Activated CD4-positive, alpha-beta T cell treated with anti-CD3 and anti-CD28 coated beads for 36 hours (primary cell): ENCODE measurements at regions of chr3 and their contacts with region 1.

Region 1: DNA sequence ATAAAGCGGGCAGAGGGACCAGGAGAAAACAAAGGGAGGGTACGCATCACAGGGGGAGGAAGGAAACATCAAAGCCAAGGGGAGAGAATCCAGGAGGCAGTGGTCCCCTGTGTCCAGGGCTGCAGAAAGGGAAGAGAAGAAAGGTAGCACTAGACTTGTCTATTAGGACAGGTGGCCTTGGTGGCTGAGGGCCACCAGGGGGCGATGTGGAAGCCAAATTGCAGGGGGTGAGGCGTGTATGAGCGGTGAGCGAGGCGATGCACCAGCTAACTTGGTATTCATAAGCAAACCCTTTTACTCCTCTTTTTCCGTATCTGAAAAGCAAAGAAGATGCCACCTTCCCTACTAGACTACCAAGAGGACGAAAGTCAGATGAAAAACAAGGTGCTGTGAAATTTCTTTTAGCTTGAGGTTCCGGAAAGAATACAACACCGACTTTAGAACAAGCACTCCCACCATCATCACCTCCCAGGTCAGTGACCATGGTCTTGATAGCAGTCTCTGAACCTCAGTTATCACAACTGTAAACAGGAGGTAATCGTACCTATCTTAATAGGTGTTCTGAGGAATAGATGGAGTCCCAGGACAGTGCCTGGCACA is 654.4 kb upstream of the ADAMTS9 start:
- DNase-seq: peak; percentile 68
- ATAC-seq: no peak
- H3K4me3 Mint-ChIP-seq: no peak overlapping the region
- H3K27ac Mint-ChIP-seq: no peak overlapping the region
- H3K4me1 Mint-ChIP-seq: no peaks in the 10 kb centered on the region
- H3K27me3 Mint-ChIP-seq: peaks cover 5% of the 10 kb centered on the region

Region 2: DNA sequence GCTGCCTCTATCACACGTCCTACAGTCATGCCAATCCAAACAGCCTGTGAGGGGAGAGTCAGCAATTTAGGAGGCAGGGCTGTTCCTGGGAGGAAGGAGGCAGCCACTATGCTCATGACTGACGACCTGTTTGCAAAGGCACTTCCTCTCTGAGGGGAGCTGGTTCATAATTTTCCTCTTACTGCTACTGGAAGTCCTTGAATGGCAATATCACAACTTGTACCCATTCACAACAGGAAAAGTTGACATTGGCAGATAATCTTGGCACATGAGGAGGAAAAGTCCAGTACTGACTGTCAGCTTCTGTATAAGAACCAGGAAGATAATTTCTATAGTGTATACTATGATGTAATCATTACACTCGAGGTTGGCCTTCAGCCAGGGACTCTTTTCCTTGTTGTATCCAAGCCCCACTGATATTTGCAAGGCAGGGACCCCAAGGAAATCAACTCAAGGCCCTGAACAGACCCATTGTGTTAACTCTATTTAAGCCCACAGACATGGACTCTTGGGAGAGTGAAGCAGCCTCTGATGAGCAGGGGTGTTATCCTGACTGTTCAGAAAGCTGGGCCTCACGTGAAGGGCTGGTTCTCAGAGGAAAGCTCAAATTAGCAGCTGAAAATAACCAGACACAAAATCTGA is 387.1 kb before region 1 on chr3:
- CTCF ChIA-PET with region 1: no interaction called
- POLR2A ChIA-PET with region 1: no interaction called
- intact Hi-C with region 1: no loop called
- DNase-seq: no peak
- ATAC-seq: no peak
- H3K4me3 Mint-ChIP-seq: no peak overlapping the region
- H3K27ac Mint-ChIP-seq: no peak overlapping the region
- H3K4me1 Mint-ChIP-seq: no peaks in the 10 kb centered on the region
- H3K27me3 Mint-ChIP-seq: no peaks in the 10 kb centered on the region

Region 3: DNA sequence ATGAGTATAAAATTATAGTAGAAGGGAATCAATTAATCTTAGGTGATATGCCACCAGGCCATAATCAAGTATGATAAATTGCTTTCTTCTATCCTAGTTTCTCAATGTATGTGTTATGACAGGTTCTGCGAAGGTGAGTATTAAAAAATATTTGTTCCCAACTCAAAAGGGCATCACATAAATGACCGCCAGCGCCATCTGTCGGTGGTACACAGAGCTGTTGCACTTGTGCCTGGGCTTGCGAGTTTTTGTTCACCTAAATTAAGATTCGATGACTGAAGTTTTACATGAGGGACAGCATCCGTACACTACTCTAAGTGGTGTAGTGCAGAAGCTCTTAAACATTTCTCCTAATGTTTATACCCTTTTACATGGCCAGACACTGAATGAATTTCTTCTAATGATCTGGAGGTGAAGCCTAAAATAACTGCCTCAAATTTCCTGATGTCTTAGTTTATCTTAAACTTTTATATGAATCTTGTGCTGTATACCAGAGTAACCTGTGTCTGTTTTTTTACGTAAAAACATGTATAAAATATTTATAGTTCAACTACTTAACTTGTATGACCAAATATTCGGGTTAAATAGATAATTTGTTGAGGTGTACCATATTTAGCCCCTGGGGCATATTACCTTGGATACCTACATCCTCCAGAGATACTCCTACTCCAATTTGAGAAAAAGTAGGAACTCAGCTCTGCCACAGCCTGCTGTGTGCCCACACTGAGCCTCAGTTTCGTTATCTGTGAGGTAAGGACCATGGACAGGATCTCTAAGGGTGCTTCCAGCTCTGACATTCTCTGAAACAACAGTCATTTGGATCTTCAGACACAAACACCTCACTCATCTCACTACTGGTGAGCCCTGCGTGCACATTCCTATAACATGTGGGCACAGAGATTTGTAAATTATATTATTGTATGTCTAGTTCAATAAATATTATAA is 331.0 kb after region 1 on chr3:
- CTCF ChIA-PET with region 1: no interaction called
- POLR2A ChIA-PET with region 1: no interaction called
- intact Hi-C with region 1: loop called in 1 of 2 experiments (anchors 10 kb)
- DNase-seq: peak; percentile 61
- ATAC-seq: no peak
- H3K4me3 Mint-ChIP-seq: no peak overlapping the region
- H3K27ac Mint-ChIP-seq: no peak overlapping the region
- H3K4me1 Mint-ChIP-seq: no peaks in the 10 kb centered on the region
- H3K27me3 Mint-ChIP-seq: peaks cover 2% of the 10 kb centered on the region

Region 4: GRCh38 chr3:65732051-65732935 is 390.1 kb after region 1 on chr3:
- CTCF ChIA-PET with region 1: no interaction called
- POLR2A ChIA-PET with region 1: no interaction called
- intact Hi-C with region 1: loop called in 1 of 2 experiments (anchors 2 kb)
- DNase-seq: peak; percentile 8
- ATAC-seq: peak; percentile 63
- H3K4me3 Mint-ChIP-seq: no peak overlapping the region
- H3K27ac Mint-ChIP-seq: no peak overlapping the region
- H3K4me1 Mint-ChIP-seq: peaks cover 1% of the 10 kb centered on the region
- H3K27me3 Mint-ChIP-seq: peaks cover 6% of the 10 kb centered on the region